GM10248 (cell line): ENCODE measurements at regions of chr6 and their contacts with region 1.

Region 1: GRCh38 chr6:11315743-11316438 is 83.4 kb upstream of the NEDD9 start:
- DNase-seq: no peak
- CTCF ChIP-seq: no peak

Region 2: DNA sequence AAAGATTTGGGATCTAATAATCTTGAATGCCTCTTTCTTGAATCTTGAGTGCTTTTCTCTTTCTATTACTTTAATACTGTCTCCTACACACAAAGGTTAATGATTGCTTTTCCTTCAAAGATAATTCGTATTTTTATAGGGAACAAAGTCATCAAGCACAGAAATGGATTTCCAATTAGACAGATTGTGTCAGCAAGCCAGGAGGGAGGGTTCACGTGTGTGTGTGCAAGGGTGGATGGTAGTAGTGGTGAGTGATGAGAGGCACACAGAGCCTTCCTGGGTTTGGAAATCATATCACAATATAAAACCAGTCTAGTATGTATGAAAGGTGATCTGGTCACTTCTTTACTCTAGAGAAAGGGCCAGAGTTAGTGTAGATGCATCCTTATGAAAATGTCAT is 32.3 kb before region 1 on chr6:
- CTCF ChIA-PET with region 1: no interaction called
- POLR2A ChIA-PET with region 1: no interaction called
- DNase-seq: no peak
- CTCF ChIP-seq: no peak

Region 3: GRCh38 chr6:11330413-11330760 is 14.5 kb after region 1 on chr6:
- CTCF ChIA-PET with region 1: interaction called, 14 read pairs
- POLR2A ChIA-PET with region 1: interaction called, 4 read pairs
- DNase-seq: no peak
- CTCF ChIP-seq: no peak